Natural killer cell (primary cell): ENCODE measurements at regions of chr17 and their contacts with region 1.

Region 1: GRCh38 chr17:69404382-69404781 is 10.1 kb upstream of the MAP2K6 start:
- DNase-seq: no peak
- ATAC-seq: no peak
- H3K4me3 ChIP-seq: no peak overlapping the region
- H3K4me3 Mint-ChIP-seq: no peak overlapping the region
- H3K27ac ChIP-seq: no peak overlapping the region
- H3K27ac Mint-ChIP-seq: no peak overlapping the region
- H3K4me1 ChIP-seq: no peaks in the 10 kb centered on the region
- H3K4me1 Mint-ChIP-seq: no peaks in the 10 kb centered on the region
- H3K27me3 ChIP-seq: no peaks in the 10 kb centered on the region
- H3K27me3 Mint-ChIP-seq: peaks cover 5 to 17% of the 10 kb centered on the region in 2 donors
- CTCF ChIP-seq: no peak

Region 2: GRCh38 chr17:69344939-69345338 is 59.4 kb before region 1 on chr17:
- intact Hi-C with region 1: loop called (anchors 10 kb)
- DNase-seq: no peak
- ATAC-seq: no peak
- H3K4me3 ChIP-seq: no peak overlapping the region
- H3K4me3 Mint-ChIP-seq: no peak overlapping the region
- H3K27ac ChIP-seq: no peak overlapping the region
- H3K27ac Mint-ChIP-seq: no peak overlapping the region
- H3K4me1 ChIP-seq: no peaks in the 10 kb centered on the region
- H3K4me1 Mint-ChIP-seq: no peaks in the 10 kb centered on the region
- H3K27me3 ChIP-seq: no peaks in the 10 kb centered on the region
- H3K27me3 Mint-ChIP-seq: peaks cover 12 to 36% of the 10 kb centered on the region in 2 donors
- CTCF ChIP-seq: no peak

Region 3: DNA sequence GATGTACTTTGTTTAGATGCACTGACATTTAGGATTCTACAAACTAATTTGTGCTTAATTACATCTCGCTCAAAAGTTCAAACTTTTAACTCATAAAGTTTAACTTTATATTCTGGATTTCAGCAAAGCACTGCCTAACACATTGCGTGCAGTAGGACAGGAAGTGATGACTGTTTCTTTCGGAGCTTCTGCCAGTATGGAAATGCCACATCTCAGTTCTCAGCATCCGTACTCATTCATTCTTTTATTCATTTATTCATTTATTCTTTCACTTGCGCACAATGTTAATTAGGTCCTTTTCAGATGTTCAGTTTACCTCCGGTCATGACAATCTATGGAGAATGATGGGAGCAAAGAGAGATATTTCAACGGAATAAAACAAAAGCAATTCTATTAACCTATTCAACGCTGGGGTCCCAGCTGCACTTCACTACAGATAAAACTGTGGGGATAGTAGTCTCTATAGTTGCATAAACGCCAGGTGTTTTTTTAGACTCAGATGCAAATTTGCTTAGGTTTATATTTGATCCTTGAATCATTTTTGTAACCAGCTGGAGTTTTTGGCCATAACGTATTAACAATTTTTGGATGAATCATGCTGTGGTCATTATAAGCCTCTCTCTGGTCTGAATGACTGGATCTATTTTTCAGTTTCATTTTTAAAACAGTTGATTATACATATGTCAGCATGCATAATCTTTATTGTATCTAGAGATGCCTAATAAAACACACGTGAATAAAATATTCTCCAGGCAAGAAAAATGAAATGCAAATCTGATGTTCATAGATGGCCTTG is 908.9 kb after region 1 on chr17:
- intact Hi-C with region 1: no loop called
- DNase-seq: no peak
- ATAC-seq: no peak
- H3K4me3 ChIP-seq: no peak overlapping the region
- H3K4me3 Mint-ChIP-seq: no peak overlapping the region
- H3K27ac ChIP-seq: no peak overlapping the region
- H3K27ac Mint-ChIP-seq: no peak overlapping the region
- H3K4me1 ChIP-seq: no peaks in the 10 kb centered on the region
- H3K4me1 Mint-ChIP-seq: no peaks in the 10 kb centered on the region
- H3K27me3 ChIP-seq: no peaks in the 10 kb centered on the region
- H3K27me3 Mint-ChIP-seq: no peaks in the 10 kb centered on the region
- CTCF ChIP-seq: no peak